Right ventricle myocardium superior (tissue), 1 donor: ENCODE measurements at regions of chr5 and their contacts with region 1.

Region 1: DNA sequence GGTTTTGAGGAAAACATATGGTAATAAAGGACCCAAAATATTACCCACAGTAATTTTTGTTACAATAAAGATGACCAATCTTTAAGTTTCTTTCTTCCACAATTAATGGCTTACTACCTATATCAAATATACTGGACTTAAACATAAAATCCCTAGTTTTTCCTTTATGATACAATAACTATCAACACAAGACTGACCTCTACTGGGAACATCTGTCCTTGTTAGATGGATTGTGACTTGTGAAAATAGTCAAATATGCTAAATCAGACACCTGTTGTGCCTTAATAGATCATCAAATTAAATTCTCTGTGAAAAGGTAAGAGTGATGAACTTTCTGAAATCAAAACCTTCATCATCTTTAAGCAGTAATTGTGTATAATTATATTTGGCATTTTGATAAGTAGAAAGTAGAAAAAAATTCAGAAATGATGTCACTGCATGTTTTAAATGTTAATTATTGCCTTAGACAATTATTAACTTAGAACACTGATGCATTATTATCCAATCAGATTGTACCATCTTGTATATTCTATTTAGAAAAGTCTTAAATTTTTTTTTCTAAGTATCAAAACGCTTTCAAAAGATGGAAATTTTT is 113.6 kb downstream of the DEPDC1B start:
- DNase-seq: no peak
- ATAC-seq: no peak

Region 2: DNA sequence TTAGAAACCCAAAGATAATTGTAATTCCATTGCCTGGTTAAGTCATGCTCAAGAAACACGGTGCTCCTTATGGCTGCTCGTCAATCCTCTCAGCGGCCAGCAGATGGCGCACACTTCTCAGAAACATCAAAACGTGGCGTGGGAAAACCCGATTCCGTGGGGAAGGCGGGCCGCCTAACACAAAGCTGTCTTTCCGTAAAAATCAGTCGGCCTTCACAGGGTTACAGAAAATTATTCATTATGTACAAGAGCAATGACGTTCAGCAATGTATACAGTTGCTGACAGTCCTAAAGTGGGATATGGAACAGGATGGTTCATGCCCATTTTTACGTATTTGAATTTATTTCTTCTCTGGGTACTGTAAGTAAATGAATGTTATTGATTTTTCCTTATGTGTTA is 776.4 kb before region 1 on chr5:
- intact Hi-C with region 1: loop called (anchors 5 kb)
- DNase-seq: peak; percentile 86
- ATAC-seq: peak; percentile 85

Region 3: GRCh38 chr5:60295423-60295822 is 291.0 kb before region 1 on chr5:
- intact Hi-C with region 1: loop called (anchors 10 kb)
- DNase-seq: no peak
- ATAC-seq: no peak